ENCODE measurements at regions of chr7 and their contacts with region 1.

Region 1: GRCh38 chr7:518630-519483 is 789 bp downstream of the PDGFA start:
- DNase-seq: peak; percentile 66
- H3K4me3 Mint-ChIP-seq: peak overlapping the region; percentile 79
- H3K27ac Mint-ChIP-seq: no peak overlapping the region
- H3K4me1 Mint-ChIP-seq: peaks cover 19% of the 10 kb centered on the region
- H3K27me3 Mint-ChIP-seq: peaks cover 39% of the 10 kb centered on the region

Region 2: DNA sequence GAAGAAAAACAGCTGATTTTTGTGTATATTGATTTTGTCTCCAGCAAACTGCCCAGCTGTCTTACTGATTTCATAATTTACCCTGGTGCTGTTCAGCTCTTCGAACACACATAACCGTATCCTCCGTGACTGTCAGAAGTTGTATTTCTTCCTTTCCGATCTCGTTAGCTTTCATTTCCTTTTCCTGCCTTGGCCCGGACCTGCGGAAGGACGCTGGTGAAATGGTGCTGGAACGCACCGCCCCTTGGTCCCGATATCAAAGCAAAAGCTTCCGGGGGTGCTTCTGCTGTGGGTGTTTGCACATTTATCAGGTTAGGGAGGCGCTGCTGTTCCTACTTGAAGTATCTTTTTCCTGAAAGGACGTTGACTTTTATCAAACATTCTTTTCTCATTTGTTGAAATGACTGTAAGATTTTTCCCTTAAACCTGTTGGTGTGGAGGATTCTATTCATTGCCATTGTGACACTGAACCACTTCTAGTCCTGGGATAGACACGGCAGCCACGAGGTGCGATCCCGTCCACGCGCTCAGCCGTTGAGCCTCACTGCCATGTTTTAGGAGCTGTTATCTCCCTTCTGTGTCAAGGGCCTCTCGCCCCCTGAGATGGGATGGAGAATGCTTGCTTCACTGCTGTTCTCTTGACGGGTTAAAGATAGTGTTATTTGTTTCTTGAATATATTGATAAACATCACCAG is 156.3 kb before region 1 on chr7:
- CTCF ChIA-PET with region 1: no interaction called
- POLR2A ChIA-PET with region 1: no interaction called
- intact Hi-C with region 1: loop called (anchors 10 kb)
- DNase-seq: peak; percentile 63
- H3K4me3 Mint-ChIP-seq: peak overlapping the region; percentile 61
- H3K27ac Mint-ChIP-seq: peak overlapping the region; percentile 69
- H3K4me1 Mint-ChIP-seq: peaks cover 64% of the 10 kb centered on the region
- H3K27me3 Mint-ChIP-seq: no peaks in the 10 kb centered on the region

Region 3: DNA sequence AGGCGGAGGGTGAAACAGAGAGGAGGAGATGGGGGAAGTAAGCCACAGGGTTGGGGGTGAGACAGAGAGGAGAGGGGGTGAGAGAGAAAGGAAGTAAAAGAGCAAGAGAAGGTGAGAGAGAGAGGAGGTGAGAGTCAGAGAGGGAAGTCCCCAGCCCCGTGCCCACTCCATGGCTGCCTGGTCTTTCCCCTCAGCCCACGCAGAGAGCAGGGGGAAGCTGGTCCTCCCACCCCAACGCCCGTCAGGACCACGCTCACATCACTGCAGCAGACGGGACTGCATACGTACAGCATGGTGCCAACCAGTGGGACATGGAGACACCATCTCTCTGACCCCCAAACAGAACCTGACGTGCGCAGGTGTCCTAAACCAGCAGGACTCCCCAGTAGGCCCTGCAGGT is 12.9 kb after region 1 on chr7:
- CTCF ChIA-PET with region 1: no interaction called
- POLR2A ChIA-PET with region 1: no interaction called
- intact Hi-C with region 1: no loop called
- DNase-seq: no peak
- H3K4me3 Mint-ChIP-seq: no peak overlapping the region
- H3K27ac Mint-ChIP-seq: no peak overlapping the region
- H3K4me1 Mint-ChIP-seq: peaks cover 2% of the 10 kb centered on the region
- H3K27me3 Mint-ChIP-seq: peaks cover 6% of the 10 kb centered on the region

Region 4: DNA sequence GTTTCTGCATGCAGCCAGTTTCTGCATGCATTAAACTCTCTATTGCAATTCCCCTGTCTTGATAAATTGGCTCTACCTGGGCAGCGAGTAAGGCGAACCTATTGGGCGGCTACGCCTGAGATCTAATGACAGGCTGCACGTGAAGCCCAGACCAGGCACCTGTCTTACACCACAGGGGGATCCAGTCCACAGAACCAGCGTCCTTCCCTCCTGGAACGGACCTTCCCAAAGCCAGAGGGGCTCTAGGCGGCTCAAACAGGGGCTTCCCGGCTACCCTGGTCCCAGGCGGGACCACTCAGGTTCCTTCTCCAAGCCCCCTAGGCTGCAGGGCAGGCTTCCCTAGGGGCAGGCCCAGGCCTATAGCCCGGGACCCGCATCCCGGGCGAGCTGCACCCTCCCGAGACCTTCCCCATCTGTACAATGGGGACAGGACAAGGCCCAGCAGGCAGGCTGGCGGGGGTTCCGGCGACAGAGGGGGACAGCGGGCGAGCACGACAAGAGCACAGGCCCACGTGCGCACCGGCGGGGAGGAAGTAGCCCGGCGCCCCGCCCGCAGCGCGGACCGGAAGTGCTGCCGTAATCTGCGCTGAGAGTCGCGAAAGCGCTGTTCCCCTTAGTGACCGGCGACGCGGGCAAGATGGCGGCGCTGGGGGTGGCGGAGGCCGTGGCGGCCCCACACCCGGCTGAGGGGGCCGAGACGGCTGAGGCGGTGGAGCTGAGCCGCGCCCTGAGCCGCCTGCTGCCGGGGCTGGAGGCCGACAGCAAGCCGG is 207.4 kb after region 1 on chr7 and contains the start of gene DNAAF5:
- CTCF ChIA-PET with region 1: no interaction called
- POLR2A ChIA-PET with region 1: no interaction called
- intact Hi-C with region 1: loop called (anchors 5 kb)
- DNase-seq: peak; percentile 92
- H3K4me3 Mint-ChIP-seq: peak within 1 kb of the TSS; percentile 86
- H3K27ac Mint-ChIP-seq: peak within 1 kb of the TSS; percentile 76
- H3K4me1 Mint-ChIP-seq: peaks cover 27% of the 10 kb centered on the region
- H3K27me3 Mint-ChIP-seq: no peaks in the 10 kb centered on the region
- total RNA-seq, gene DNAAF5: 26.8 to 29.5 TPM

Measured in activated CD4-positive, alpha-beta memory T cell treated with anti-CD3 and anti-CD28 coated beads for 36 hours (primary cell).